MCF 10A (cell line): ENCODE measurements at regions of chr6 and their contacts with region 1.

Region 1: GRCh38 chr6:148578245-148578732 is 168.5 kb upstream of the UST start:
- DNase-seq: peak; percentile 79
- H3K4me3 Mint-ChIP-seq: no peak overlapping the region
- H3K27ac Mint-ChIP-seq: no peak overlapping the region
- H3K4me1 Mint-ChIP-seq: no peaks in the 10 kb centered on the region
- H3K27me3 Mint-ChIP-seq: no peaks in the 10 kb centered on the region
- CTCF ChIP-seq: peak; percentile 83

Region 2: DNA sequence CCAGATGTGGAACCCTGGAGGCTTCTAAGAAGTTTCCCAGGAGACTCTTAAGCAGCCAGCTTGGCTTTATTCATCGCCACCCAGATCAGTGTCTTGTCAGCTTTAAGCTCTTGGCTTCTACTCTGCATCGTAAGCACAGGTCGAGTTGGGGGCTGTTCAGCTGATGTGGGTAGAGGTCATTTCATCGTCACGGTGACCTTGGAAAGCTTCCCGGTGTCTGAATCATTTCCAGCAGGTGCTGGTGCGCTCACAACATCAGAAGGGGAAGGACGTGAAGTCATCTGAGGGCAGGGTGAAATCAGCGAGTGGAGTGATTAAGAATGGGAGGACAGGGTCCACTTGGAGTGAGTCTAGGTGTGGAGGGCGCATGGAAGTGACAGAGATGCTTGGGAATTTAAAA is 123.1 kb before region 1 on chr6:
- CTCF ChIA-PET with region 1: no interaction called
- POLR2A ChIA-PET with region 1: no interaction called
- intact Hi-C with region 1: no loop called
- DNase-seq: peak; percentile 8
- H3K4me3 Mint-ChIP-seq: no peak overlapping the region
- H3K27ac Mint-ChIP-seq: no peak overlapping the region
- H3K4me1 Mint-ChIP-seq: no peaks in the 10 kb centered on the region
- H3K27me3 Mint-ChIP-seq: no peaks in the 10 kb centered on the region
- CTCF ChIP-seq: no peak

Region 3: GRCh38 chr6:148487461-148487860 is 90.8 kb before region 1 on chr6:
- CTCF ChIA-PET with region 1: no interaction called
- POLR2A ChIA-PET with region 1: no interaction called
- intact Hi-C with region 1: no loop called
- DNase-seq: no peak
- H3K4me3 Mint-ChIP-seq: no peak overlapping the region
- H3K27ac Mint-ChIP-seq: no peak overlapping the region
- H3K4me1 Mint-ChIP-seq: no peaks in the 10 kb centered on the region
- H3K27me3 Mint-ChIP-seq: no peaks in the 10 kb centered on the region
- CTCF ChIP-seq: no peak

Region 4: DNA sequence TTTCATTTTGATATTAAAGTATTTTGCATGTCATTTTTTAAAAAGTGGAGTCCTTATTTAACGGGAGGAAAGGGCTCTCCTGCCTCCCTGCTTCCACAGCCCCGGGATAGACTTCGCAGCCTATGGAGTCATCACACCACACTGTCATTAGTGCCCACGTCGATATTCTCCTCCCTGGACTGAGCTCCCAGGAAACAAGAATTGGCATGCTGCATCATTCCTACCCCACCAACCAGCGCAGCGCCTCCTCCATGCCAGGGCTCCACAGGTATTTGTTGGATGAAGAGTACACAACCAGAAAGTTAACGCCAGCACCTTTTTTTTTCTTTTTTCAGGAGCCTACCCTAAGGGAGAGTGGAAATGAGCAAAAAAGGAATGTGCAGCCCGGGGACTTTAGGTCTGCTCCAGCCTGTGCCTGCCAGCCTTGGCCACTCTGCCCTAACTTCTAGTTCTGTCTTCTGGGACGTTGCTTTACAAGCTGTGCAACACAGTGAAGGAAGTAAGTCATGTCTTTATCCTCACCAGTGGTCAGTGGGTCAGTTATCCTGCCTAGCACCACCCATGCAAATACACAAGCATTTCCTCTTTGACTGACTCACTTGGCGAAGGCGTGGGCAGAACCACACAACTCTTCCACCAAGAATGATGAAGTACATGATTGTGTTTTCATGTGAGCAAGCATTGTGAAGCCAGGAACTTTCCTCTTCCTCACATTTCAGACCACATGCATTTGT is 12.2 kb before region 1 on chr6:
- CTCF ChIA-PET with region 1: interaction called, 22 read pairs
- POLR2A ChIA-PET with region 1: no interaction called
- intact Hi-C with region 1: no loop called
- DNase-seq: peak; percentile 73
- H3K4me3 Mint-ChIP-seq: no peak overlapping the region
- H3K27ac Mint-ChIP-seq: no peak overlapping the region
- H3K4me1 Mint-ChIP-seq: peaks cover 18% of the 10 kb centered on the region
- H3K27me3 Mint-ChIP-seq: no peaks in the 10 kb centered on the region
- CTCF ChIP-seq: no peak

Region 5: GRCh38 chr6:148700741-148701311 is 122.5 kb after region 1 on chr6:
- CTCF ChIA-PET with region 1: interaction called, 26 read pairs
- POLR2A ChIA-PET with region 1: interaction called, 5 read pairs
- intact Hi-C with region 1: loop called (anchors 2 kb)
- DNase-seq: peak; percentile 43
- H3K4me3 Mint-ChIP-seq: peak overlapping the region; percentile 68
- H3K27ac Mint-ChIP-seq: peak overlapping the region; percentile 83
- H3K4me1 Mint-ChIP-seq: peaks cover 12% of the 10 kb centered on the region
- H3K27me3 Mint-ChIP-seq: no peaks in the 10 kb centered on the region
- CTCF ChIP-seq: no peak

Region 6: DNA sequence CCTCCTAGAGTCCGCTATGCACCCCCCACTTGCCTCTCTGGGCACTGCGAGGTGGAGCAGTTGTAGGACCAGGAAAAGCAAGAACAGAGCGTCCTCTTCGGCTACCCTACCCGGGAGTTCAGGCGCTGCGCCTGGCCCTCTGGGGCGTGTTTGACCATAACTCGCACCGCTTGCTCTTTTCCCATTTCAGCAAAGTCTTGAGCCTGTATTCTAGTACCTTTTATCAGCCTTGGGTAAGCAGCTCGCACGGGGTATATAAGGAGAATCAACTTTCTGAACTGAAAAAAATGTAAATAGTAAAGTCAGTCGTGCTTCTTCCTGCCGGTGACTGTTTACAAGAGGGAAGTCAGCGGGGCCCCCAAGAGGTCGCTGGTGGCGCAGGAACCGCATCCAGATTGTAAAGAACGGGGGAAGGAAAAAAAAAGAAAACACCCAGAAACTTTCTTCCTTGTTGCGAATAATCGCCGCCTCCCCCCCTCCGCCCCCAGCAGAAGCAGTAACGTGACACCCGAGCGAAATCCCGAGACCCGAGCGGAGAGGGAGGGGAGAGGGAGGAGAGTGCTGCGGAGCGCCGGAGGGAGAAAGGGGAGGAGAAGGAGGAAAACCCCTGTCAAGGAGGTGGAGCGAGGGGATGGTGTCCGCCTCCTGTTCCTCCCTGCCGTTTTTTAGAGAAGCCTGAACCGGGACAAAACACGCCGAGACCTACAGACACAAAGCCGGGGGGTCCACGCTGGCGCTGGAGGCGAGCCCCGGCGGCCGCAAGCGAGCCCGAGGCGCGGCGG is 168.3 kb after region 1 on chr6 and contains the start of gene UST:
- CTCF ChIA-PET with region 1: interaction called, 3 read pairs
- POLR2A ChIA-PET with region 1: interaction called, 3 read pairs
- intact Hi-C with region 1: loop called (anchors 1 kb)
- DNase-seq: peak; percentile 96
- H3K4me3 Mint-ChIP-seq: peak within 1 kb of the TSS; percentile 88
- H3K27ac Mint-ChIP-seq: peak within 1 kb of the TSS; percentile 74
- H3K4me1 Mint-ChIP-seq: peaks cover 42% of the 10 kb centered on the region
- H3K27me3 Mint-ChIP-seq: no peaks in the 10 kb centered on the region
- CTCF ChIP-seq: peak; percentile 76
- total RNA-seq, gene UST: 10.0 and 10.8 TPM in 2 replicates

Region 7: GRCh38 chr6:148959004-148959403 is 380.7 kb after region 1 on chr6:
- CTCF ChIA-PET with region 1: interaction called, 18 read pairs
- POLR2A ChIA-PET with region 1: no interaction called
- intact Hi-C with region 1: loop called (anchors 1 kb)
- DNase-seq: no peak
- H3K4me3 Mint-ChIP-seq: no peak overlapping the region
- H3K27ac Mint-ChIP-seq: no peak overlapping the region
- H3K4me1 Mint-ChIP-seq: no peaks in the 10 kb centered on the region
- H3K27me3 Mint-ChIP-seq: no peaks in the 10 kb centered on the region
- CTCF ChIP-seq: no peak

Region 8: GRCh38 chr6:149082286-149082707 is 504.0 kb after region 1 on chr6:
- CTCF ChIA-PET with region 1: interaction called, 4 read pairs
- POLR2A ChIA-PET with region 1: no interaction called
- intact Hi-C with region 1: loop called (anchors 5 kb)
- DNase-seq: peak; percentile 78
- H3K4me3 Mint-ChIP-seq: no peak overlapping the region
- H3K27ac Mint-ChIP-seq: no peak overlapping the region
- H3K4me1 Mint-ChIP-seq: peaks cover 11% of the 10 kb centered on the region
- H3K27me3 Mint-ChIP-seq: no peaks in the 10 kb centered on the region
- CTCF ChIP-seq: peak; percentile 72